ENCODE measurements at regions of chr16 and their contacts with region 1.

Region 1: DNA sequence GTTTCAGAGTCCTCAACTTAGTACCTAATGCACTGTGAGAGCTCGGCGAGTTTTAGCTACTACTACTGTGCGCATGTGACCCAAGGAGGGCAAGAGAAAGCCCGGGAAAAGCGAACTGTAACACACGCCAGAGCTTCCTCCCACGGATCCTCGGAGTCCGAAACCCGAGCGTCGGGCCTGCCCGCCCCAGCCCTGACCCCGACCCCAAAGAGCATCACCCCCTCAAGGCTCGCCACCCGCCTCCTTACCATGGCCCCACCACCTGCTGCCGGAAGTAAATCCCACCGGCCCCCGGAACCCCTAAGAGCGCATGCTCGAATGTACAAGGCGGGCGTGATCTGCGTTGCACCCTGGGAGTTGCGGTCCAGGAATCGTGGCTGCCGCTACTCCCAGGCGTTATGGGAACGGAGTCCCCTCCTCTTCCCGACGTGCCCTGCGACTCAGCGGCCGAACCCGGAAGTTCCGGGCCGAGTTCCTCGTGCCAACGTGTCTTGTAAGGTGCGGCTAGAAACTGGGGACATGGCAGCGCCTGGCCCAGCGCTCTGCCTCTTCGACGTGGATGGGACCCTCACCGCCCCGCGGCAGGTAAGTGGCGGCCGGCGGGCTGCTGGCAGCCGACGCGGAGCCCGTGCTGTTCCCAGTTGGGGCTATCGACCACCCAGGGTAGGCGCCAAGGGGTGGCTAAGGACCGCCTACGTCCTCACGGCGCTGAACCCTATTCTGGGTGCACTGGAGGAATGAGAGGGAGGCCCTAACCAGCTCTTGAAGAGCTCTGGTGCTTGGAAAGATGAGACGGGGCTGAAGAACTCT is at the starts of genes PMM2 and TMEM186:
- DNase-seq: peak; percentile 95
- H3K4me3 Mint-ChIP-seq: peak within 1 kb of the TSS; percentile 96
- H3K27ac Mint-ChIP-seq: peak within 1 kb of the TSS; percentile 82
- H3K4me1 Mint-ChIP-seq: peaks cover 42% of the 10 kb centered on the region
- H3K27me3 Mint-ChIP-seq: no peaks in the 10 kb centered on the region
- total RNA-seq, gene PMM2: 82.9 and 88.7 TPM in 2 replicates
- total RNA-seq, gene TMEM186: 16.9 and 19.0 TPM in 2 replicates

Region 2: DNA sequence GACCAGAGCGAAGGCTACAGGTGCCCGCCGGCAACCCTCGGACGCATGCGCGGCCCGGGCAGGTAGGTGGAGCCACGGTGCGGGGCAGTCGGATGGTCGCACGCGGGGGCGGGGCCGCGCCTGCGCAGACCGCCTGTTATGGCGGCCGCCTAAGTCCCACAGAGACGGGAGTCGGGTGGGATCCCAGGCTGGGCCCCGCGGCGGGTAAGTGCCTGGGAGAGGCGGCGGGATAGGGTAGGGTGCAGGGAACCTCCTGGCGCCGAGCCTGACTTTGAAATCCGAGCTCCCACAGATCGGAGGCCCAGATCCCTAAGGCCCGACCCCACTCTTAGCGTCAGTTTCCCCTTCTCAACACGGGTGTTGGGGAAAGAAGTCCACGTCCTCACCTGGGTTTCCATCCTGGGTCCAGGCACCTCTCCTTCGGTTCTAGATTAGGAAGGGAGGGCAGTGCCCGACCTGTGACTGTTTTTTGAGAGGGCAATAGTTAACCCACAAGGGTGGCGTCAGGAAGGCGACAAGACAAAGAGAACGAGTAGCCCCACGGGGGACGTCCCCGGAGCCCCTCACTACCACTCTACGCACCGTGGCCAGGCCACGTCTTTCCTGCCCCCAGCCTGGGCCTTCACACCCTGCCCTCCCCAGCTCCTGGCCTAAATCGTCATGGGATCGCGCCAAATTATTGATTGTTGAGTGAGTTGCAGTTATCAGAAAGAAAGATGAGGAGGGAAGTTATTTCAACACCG is 175.8 kb before region 1 on chr16 and contains the start of gene METTL22:
- intact Hi-C with region 1: loop called (anchors 1 kb)
- DNase-seq: peak; percentile 90
- H3K4me3 Mint-ChIP-seq: peak within 1 kb of the TSS; percentile 99
- H3K27ac Mint-ChIP-seq: peak within 1 kb of the TSS; percentile 87
- H3K4me1 Mint-ChIP-seq: peaks cover 12% of the 10 kb centered on the region
- H3K27me3 Mint-ChIP-seq: peaks cover 8% of the 10 kb centered on the region
- total RNA-seq, gene METTL22: 30.0 and 32.0 TPM in 2 replicates

Region 3: DNA sequence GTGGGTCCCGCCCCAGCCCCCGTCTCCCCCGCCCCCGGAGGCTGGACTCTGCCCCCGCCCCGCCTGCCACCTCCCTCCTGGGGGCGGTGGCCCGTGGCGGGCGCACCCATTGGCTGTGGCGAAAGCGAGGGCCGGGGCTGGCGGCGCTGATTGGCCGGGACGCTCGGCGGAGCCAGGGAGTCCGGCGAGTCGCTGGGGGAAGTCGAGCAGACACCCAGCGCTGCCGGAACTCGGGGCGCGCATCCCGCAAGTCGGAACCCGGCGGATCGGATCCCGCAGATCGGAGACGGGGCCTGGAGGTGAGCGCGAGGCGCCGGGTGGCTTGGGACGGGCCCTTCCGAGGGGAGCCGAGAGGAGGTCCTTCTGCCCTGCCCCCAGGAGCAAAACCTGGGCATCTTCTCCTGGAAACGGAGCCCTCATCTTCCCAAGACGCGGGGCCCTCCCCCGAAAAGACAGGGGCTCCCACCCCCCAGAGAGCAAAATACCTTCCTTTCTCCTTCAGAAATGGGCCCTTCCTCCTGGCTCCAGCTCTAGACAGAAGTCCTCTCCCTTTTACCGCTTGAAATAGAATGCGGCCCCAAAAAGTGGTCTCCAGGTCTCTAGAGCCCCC is 123.1 kb before region 1 on chr16 and contains the start of gene ABAT:
- intact Hi-C with region 1: loop called (anchors 1 kb)
- DNase-seq: peak; percentile 91
- H3K4me3 Mint-ChIP-seq: peak within 1 kb of the TSS; percentile 87
- H3K27ac Mint-ChIP-seq: peak within 1 kb of the TSS; percentile 81
- H3K4me1 Mint-ChIP-seq: peaks cover 20% of the 10 kb centered on the region
- H3K27me3 Mint-ChIP-seq: peaks cover 6% of the 10 kb centered on the region
- total RNA-seq, gene ABAT: 7.3 and 7.7 TPM in 2 replicates

Region 4: DNA sequence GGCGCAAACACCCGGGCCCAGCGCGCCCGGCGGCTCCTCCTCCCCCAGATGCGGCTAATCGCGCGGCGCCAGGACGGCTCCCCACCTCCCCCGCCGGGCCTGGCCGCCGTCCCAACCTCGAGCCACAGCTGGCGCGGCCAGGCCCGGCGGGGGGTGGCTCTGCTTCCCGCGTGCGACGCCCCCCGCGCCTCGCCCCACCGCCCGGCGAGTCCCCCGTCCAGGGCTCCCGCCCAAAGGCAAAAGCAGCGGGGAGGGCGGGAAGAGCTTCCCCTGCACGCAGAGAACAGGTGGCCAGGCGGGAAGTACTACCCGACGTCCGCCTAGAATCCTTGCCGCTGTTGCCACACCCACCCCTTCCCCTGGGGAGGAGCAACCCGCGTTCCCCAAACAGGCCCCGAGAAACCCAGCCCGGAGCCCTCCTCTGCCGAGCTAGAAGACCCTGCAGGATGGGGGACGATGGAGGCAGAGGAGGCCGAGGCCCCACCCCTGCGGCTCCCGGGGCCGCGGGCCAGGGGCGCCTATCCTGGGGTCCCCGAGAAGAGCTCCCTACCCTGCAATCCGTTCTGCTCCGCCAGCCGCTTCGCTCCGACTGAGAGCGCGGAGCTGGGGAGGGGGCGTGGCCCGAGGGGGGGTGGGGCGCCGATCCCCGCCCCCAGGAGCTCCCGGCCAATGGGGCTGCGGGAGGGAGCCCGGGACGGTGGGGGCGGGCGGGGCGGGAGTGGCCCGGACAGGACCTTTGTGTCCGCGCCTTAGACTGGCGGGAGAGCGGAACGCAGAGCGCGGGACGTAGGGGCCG is 71.0 kb after region 1 on chr16 and contains the start of gene CARHSP1:
- intact Hi-C with region 1: loop called (anchors 1 kb)
- DNase-seq: peak; percentile 79
- H3K4me3 Mint-ChIP-seq: peak within 1 kb of the TSS; percentile 94
- H3K27ac Mint-ChIP-seq: peak within 1 kb of the TSS; percentile 96
- H3K4me1 Mint-ChIP-seq: peaks cover 46% of the 10 kb centered on the region
- H3K27me3 Mint-ChIP-seq: no peaks in the 10 kb centered on the region
- total RNA-seq, gene CARHSP1: 79.4 and 80.5 TPM in 2 replicates

Region 5: DNA sequence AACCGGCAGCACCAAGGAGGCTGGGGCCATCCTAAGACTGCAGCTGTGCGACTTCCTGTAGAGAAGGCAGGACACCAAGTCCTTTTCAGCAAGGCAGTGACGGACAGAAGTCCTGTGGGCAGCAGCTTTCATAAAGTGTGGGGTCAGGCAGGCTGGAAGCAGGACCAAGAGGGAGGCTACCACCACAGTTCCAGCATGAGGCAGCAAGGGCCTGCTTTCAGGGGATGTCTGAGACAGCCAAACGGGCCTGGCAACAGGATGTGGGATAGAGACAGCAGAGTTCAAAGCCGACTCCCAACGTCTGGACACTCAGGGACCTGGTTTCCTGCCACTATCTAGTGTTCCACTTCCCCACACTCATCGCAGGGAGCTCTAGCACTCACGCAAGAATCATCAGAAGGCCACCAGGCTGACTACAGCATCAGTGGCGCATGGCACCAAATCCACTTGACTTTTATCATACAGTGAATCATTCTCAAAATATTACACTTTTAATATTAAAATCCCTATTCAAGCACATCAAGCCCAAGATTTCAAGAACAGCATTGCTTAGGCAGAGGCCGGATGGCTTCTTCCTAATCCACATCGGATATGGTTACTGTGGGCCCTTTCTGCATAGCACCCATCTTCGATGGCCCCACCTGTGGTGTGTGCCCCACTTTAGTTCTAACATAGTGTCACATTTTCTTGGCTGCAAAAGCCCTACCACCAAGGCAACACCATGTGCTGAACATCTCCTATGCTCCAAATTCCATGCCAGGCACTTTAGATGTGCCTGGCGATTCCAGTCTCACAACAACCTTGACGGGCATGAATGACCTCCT is 161.0 kb after region 1 on chr16:
- intact Hi-C with region 1: loop called (anchors 2 kb)
- DNase-seq: no peak
- H3K4me3 Mint-ChIP-seq: peak overlapping the region; percentile 69
- H3K27ac Mint-ChIP-seq: peak overlapping the region; percentile 77
- H3K4me1 Mint-ChIP-seq: peaks cover 67% of the 10 kb centered on the region
- H3K27me3 Mint-ChIP-seq: no peaks in the 10 kb centered on the region

Region 6: DNA sequence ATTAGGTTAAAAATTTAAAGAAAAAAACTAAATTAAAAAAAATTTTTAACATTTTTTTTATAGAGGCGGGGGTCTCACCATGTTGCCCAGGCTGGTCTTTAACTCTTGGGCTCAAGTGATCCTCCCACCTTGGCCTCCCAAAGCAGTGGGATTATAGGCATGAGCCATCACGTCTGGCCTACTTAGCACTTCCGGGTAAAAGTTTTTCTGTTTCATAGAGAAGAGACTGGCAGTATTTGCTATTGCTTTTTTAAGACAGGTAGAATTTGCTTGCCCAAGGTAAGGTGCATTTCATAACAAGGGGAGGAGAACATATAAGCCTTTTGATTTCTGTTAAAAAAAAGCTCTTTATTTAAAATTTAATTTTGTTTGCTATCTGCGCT is 281.9 kb after region 1 on chr16:
- intact Hi-C with region 1: loop called (anchors 2 kb)
- DNase-seq: no peak
- H3K4me3 Mint-ChIP-seq: no peak overlapping the region
- H3K27ac Mint-ChIP-seq: no peak overlapping the region
- H3K4me1 Mint-ChIP-seq: peaks cover 28% of the 10 kb centered on the region
- H3K27me3 Mint-ChIP-seq: no peaks in the 10 kb centered on the region

Measured in activated T-helper 1 cell treated with anti-CD3 and anti-CD28 coated beads, Interleukin-12 subunit alpha, Interleukin-12 subunit beta, Interleukin-2, Interleukin-4 antibody, amounts not matched to agents 30 ng/mL and 10 ng/mL and 1 ng/mL, durations not matched to agents 14 hours and 24 hours and 36 hours (primary cell).